ENCODE measurements at regions of chr2 and their contacts with region 1.

Region 1: GRCh38 chr2:3575534-3576262 is 638 bp downstream of the RPS7 start:
- DNase-seq: peak; percentile 29 to 82 (median 62)
- ATAC-seq: peak; percentile 63
- H3K4me3 ChIP-seq: peak overlapping the region; percentile 98
- H3K27ac ChIP-seq: peak overlapping the region; percentile 86
- H3K4me1 ChIP-seq: peaks cover 14% of the 10 kb centered on the region in 2 experiments
- H3K27me3 ChIP-seq: no peaks in the 10 kb centered on the region
- CTCF ChIP-seq: no peak
- EP300 ChIP-seq: no peak
- POLR2A ChIP-seq: no peak
- RAD21 ChIP-seq: 0 out of 4 replicates have a peak, but pooled peaks of 1 of the 2 experiments have one; percentile 3

Region 2: DNA sequence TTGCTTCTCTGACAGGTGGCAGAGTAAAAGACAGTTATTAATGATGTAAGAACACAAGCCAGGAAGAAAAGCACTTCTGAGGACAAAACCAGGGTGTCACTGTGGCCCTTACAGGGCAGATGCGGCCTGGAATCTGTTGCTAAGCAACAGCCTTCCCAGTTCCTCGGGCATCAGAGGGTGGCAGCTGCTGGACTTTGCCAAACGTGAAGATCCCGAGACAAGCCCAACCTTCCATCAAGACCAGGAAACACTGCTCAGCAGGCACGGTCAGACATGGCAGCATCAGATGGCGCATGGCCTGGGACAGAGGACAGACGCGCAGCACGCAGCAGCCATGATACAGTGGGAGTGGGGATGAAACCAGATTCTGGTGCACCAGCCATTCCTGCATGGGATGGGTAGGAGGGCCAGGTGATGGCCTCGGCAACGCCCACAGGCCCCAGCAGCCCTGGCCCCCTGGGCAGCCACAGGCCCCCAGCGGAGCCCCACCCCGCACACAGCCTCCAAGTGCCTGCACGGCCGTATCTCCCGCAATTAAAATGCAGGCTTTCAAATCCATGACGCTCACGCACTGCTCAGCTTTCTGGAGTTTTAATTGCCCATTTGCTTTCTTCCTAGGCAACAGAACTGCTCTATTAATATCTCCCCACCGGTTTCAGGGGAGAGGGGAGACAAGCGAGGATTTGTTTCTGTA is 287.1 kb before region 1 on chr2:
- CTCF ChIA-PET with region 1: no interaction called
- POLR2A ChIA-PET with region 1: no interaction called
- in situ Hi-C with region 1: no loop called
- intact Hi-C with region 1: no loop called
- DNase-seq: no peak
- ATAC-seq: no peak
- H3K4me3 ChIP-seq: no peak overlapping the region
- H3K27ac ChIP-seq: no peak overlapping the region
- H3K4me1 ChIP-seq: no peaks in the 10 kb centered on the region; a peak in 2 of 5 replicates
- H3K27me3 ChIP-seq: no peaks in the 10 kb centered on the region
- CTCF ChIP-seq: no peak
- EP300 ChIP-seq: no peak
- POLR2A ChIP-seq: no peak
- RAD21 ChIP-seq: no peak

Region 3: DNA sequence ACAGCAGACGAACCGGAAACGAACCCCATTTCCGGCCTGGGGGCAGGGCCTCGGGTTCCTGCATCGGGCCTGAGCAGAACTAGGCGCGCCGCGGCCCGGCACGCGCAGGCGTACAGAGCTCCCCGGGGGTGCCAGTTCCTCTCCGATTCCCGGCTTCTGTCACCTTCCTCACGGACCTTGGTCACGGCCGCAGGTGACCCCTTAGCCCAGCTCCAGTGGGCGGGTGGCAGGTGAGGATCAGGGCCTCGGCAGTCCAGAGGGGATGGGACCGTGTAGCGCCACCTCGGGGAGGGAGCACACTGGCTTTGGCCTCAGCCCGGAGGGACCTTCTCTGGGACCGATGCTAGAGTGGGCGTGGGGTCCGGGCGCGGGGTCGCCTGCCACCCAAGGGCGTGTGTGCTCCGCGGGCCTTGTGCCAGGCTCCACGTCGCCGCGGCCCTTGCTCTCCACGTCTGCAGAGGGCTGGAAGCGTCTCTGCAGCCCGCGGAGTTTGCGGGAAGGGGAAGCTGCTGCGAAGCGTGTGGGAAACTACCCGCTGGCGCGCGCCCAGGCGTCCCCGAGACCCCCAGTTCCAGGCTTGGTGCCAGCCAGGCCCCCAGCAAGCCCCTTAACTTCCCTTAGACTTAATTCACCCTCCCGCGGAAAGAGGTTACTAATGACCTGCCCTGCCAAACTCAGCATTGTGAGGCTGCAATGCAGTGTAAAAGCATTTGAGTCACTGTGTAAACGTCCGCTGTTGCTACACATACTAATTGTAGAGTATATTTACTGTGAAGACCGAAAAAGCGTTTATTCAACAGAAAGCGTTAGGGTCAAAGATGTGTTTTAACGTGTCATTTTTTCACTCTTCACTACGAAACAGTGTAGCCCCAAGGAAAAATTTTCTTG is 195.8 kb before region 1 on chr2 and contains the start of gene TRAPPC12:
- CTCF ChIA-PET with region 1: no interaction called
- POLR2A ChIA-PET with region 1: no interaction called
- in situ Hi-C with region 1: no loop called
- intact Hi-C with region 1: loop called (anchors 2 kb)
- DNase-seq: peak; percentile 84 to 96 (median 89)
- ATAC-seq: peak; percentile 86
- H3K4me3 ChIP-seq: peak within 1 kb of the TSS; percentile 99
- H3K27ac ChIP-seq: peak within 1 kb of the TSS; percentile 89
- H3K4me1 ChIP-seq: peaks cover 17 to 29% of the 10 kb centered on the region in 2 experiments
- H3K27me3 ChIP-seq: no peaks in the 10 kb centered on the region
- CTCF ChIP-seq: peak; percentile 53 to 67 (median 53)
- EP300 ChIP-seq: no peak
- POLR2A ChIP-seq: peak; percentile 98
- RAD21 ChIP-seq: peak in 1 of 2 experiments; percentile 39; a peak in 1 of 4 replicates
- polyA plus RNA-seq, gene TRAPPC12: 8.0 to 17.3 TPM

Region 4: GRCh38 chr2:3518496-3519254 is 57.0 kb before region 1 on chr2:
- CTCF ChIA-PET with region 1: no interaction called
- POLR2A ChIA-PET with region 1: no interaction called
- in situ Hi-C with region 1: no loop called
- intact Hi-C with region 1: loop called (anchors 2 kb)
- DNase-seq: peak; percentile 98 to 100 (median 99)
- ATAC-seq: peak; percentile 85
- H3K4me3 ChIP-seq: peak overlapping the region; percentile 71
- H3K27ac ChIP-seq: peak overlapping the region; percentile 87
- H3K4me1 ChIP-seq: peaks cover 23 to 28% of the 10 kb centered on the region in 2 experiments
- H3K27me3 ChIP-seq: no peaks in the 10 kb centered on the region
- CTCF ChIP-seq: no peak; a peak in 1 of 6 replicates
- EP300 ChIP-seq: 0 out of 2 replicates have a peak, but pooled peaks have one; percentile 3
- POLR2A ChIP-seq: peak; percentile 69
- RAD21 ChIP-seq: no peak

Region 5: GRCh38 chr2:3536682-3537632 is 38.7 kb before region 1 on chr2:
- CTCF ChIA-PET with region 1: no interaction called
- POLR2A ChIA-PET with region 1: interaction called, 3 read pairs
- in situ Hi-C with region 1: no loop called
- intact Hi-C with region 1: loop called (anchors 1 kb)
- DNase-seq: peak; percentile 75 to 83 (median 79)
- ATAC-seq: peak; percentile 93
- H3K4me3 ChIP-seq: peak overlapping the region; percentile 40
- H3K27ac ChIP-seq: peak overlapping the region; percentile 86
- H3K4me1 ChIP-seq: peaks cover 9 to 18% of the 10 kb centered on the region in 2 experiments; a peak in 4 of 5 replicates
- H3K27me3 ChIP-seq: no peaks in the 10 kb centered on the region
- CTCF ChIP-seq: peak; percentile 69 to 77 (median 70)
- EP300 ChIP-seq: no peak
- POLR2A ChIP-seq: no peak
- RAD21 ChIP-seq: peak in 1 of 2 experiments; percentile 51; a peak in 2 of 4 replicates

Region 6: DNA sequence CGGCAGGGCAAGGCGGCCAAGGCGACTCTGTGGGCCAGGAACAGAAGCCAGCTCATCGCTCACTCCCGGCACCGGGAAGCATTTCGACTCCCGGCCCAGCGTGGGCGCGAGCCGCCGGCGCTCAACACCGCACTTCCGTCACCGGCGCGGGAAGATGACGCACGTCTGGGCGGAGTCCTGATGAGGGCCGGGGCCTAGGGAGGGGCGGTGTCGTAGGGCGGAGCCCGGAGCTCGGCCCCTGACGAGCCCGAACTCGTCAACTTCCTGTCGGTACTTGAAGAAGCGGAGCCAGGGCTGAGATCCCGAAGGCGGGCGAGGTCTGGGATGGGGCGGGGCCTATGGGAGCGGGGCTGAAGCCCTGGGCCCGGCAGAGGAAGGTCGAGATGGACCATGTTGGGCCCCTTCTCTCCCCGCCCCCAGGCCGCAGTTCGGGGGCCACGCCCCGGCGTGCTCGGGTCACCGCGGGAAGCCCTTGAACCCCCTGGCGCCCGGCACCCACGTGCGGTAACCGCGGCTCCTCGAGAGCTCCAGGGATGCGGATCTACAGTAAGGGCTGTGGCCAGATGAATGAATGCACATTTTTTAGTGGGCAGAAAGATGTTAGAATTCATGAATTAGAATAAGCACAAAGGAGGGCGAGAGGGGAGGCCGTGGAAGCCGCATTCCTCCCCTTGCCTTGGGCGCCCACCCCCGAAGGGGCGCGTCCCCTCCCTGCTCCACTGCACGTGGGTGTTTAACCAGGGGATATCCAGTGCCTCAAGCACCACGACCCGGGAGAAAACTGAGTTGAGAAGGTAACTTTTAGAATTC is 17.3 kb before region 1 on chr2 and contains the start of gene RNASEH1:
- CTCF ChIA-PET with region 1: no interaction called
- POLR2A ChIA-PET with region 1: interaction called, 4 read pairs
- in situ Hi-C with region 1: no loop called
- intact Hi-C with region 1: loop called (anchors 1 kb)
- DNase-seq: peak; percentile 98 to 99 (median 98)
- ATAC-seq: peak; percentile 99
- H3K4me3 ChIP-seq: peak within 1 kb of the TSS; percentile 99
- H3K27ac ChIP-seq: peak within 1 kb of the TSS; percentile 89
- H3K4me1 ChIP-seq: peaks cover 16 to 20% of the 10 kb centered on the region in 2 experiments; a peak in 4 of 5 replicates
- H3K27me3 ChIP-seq: no peaks in the 10 kb centered on the region
- CTCF ChIP-seq: no peak
- EP300 ChIP-seq: no peak; the same call in 1 of the 2 replicates
- POLR2A ChIP-seq: peak; percentile 95
- RAD21 ChIP-seq: peak in 1 of 2 experiments; percentile 15; a peak in 1 of 4 replicates
- polyA plus RNA-seq, gene RNASEH1: 27.5 to 32.7 TPM

Measured in K562 (cell line).